Esophagus muscularis mucosa (tissue), 4 donors: ENCODE measurements at regions of chr4 and their contacts with region 1.

Region 1: DNA sequence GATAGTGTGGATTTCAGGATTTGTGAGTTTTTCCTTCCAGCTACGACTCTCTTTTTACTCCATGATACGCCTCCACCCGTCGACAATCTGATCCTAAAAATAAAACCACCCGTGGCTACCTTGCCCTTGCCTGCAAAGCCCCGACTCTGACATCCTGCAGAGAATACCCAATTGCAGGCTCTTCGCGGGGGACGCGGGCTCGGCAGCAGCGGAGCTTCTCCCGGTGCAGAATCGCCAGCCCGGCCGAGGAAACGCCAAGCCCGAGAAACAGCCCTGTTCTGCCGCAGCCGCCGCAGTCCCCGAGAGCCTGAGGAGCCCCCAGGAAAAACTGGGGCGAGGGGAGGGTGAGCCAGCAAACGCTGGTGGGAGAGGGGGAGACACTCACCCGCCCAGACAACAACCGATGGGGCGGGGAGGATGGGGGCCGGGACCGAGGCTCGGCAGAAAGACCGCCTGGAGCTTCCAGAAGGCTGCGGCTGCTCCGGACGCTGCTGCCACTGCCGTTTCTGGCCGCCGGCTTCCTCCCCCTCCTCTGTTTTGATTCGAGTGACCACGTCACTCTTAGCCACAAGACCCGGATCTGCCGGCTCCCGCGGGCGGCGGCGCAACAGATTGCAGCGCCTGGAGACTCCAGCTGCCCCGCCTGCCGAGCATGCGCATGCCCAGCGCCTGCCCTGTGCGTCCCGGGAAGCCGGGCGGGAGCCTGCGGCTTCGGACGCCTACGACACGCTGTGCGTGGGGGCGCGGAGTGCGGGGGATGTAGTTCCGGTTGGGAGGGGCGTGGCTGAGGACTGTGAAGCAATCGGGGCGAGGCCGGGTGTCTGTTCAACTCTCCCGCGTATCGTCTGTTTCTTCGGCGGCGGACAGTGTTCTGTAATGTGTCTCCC is at the start of gene SMIM14:
- DNase-seq: peak; percentile 99
- H3K4me3 ChIP-seq: peak within 1 kb of the TSS; percentile 72 to 96 (median 92)
- H3K27ac ChIP-seq: peak within 1 kb of the TSS; percentile 94 to 100 (median 97)
- H3K4me1 ChIP-seq: peaks cover 21 to 37% (median 29%) of the 10 kb centered on the region in 4 donors
- H3K27me3 ChIP-seq: no peaks in the 10 kb centered on the region
- CTCF ChIP-seq: peak; percentile 18 to 30 (median 27)
- EP300 ChIP-seq: no peak
- POLR2A ChIP-seq: peak; percentile 93
- total RNA-seq, gene SMIM14: 27.3 to 39.0 (median 29.6) TPM

Region 2: GRCh38 chr4:39083164-39083563 is 555.4 kb before region 1 on chr4:
- intact Hi-C with region 1: no loop called
- DNase-seq: no peak
- H3K4me3 ChIP-seq: no peak overlapping the region
- H3K27ac ChIP-seq: no peak overlapping the region
- H3K4me1 ChIP-seq: no peaks in the 10 kb centered on the region
- H3K27me3 ChIP-seq: no peaks in the 10 kb centered on the region
- CTCF ChIP-seq: no peak
- EP300 ChIP-seq: no peak
- POLR2A ChIP-seq: no peak

Region 3: GRCh38 chr4:39458505-39459300 is 179.9 kb before region 1 on chr4 and contains the starts of genes LIAS and RPL9:
- intact Hi-C with region 1: loop called (anchors 5 kb)
- DNase-seq: peak; percentile 99
- H3K4me3 ChIP-seq: peak within 1 kb of the TSS; percentile 70 to 86 (median 77)
- H3K27ac ChIP-seq: peak within 1 kb of the TSS; percentile 95 to 96 (median 96)
- H3K4me1 ChIP-seq: peaks cover 24 to 47% (median 42%) of the 10 kb centered on the region in 4 donors
- H3K27me3 ChIP-seq: no peaks in the 10 kb centered on the region
- CTCF ChIP-seq: peak in 1 of 3 experiments; percentile 12
- EP300 ChIP-seq: no peak
- POLR2A ChIP-seq: peak; percentile 92
- total RNA-seq, gene LIAS: 8.5 to 11.6 (median 9.7) TPM
- total RNA-seq, gene RPL9: 1,962 to 6,543 (median 3,653) TPM

Region 4: GRCh38 chr4:39527273-39528060 is 111.1 kb before region 1 on chr4 and contains the start of gene UGDH:
- intact Hi-C with region 1: loop called (anchors 2 kb)
- DNase-seq: peak; percentile 98
- H3K4me3 ChIP-seq: peak within 1 kb of the TSS; percentile 75 to 89 (median 85)
- H3K27ac ChIP-seq: peak within 1 kb of the TSS; percentile 92 to 98 (median 95)
- H3K4me1 ChIP-seq: peaks cover 19 to 36% (median 31%) of the 10 kb centered on the region in 4 donors
- H3K27me3 ChIP-seq: no peaks in the 10 kb centered on the region
- CTCF ChIP-seq: peak in 1 of 3 experiments; percentile 16
- EP300 ChIP-seq: no peak
- POLR2A ChIP-seq: peak; percentile 87
- total RNA-seq, gene UGDH: 36.4 to 180 (median 42.1) TPM

Region 5: DNA sequence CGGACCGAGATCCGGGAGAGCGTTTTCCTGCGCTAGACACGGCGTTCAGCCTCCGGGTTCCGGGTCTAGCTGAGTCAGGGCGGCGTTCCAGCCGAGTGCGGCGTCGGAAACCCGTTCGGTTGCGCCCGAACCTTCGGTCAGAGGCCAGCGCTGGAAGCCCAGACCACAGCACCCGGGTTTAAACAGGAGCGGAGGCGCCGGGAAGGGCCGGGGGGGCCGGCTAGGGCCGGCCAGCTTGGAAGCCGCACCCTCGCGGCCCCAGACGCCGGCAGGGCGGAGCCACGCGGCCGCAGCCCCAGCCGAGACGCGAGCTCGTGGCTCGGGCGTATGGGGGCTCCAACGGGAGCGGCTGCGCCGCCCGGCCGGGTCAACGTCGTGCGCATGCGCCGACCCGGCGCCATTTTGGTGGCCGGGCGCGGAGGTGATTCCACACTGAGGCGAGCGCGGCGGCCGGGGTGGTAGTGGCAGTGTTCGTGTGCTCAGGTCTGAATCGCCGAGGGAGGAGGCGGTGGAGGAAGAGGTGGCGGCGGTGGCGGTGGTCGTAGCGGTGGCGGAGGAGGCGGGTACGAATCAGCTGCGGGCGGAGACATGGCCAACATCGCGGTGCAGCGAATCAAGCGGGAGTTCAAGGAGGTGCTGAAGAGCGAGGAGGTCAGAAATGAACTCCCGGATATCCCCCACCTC is 59.3 kb after region 1 on chr4 and contains the start of gene UBE2K:
- intact Hi-C with region 1: loop called (anchors 5 kb)
- DNase-seq: peak; percentile 94
- H3K4me3 ChIP-seq: peak within 1 kb of the TSS; percentile 85 to 92 (median 88)
- H3K27ac ChIP-seq: peak within 1 kb of the TSS; percentile 92 to 96 (median 94)
- H3K4me1 ChIP-seq: peaks cover 12 to 50% (median 40%) of the 10 kb centered on the region in 4 donors
- H3K27me3 ChIP-seq: no peaks in the 10 kb centered on the region
- CTCF ChIP-seq: peak in 1 of 3 experiments; percentile 18
- EP300 ChIP-seq: no peak
- POLR2A ChIP-seq: peak; percentile 78
- total RNA-seq, gene UBE2K: 31.7 to 41.5 (median 34.3) TPM

Region 6: GRCh38 chr4:39977489-39978377 is 339.1 kb after region 1 on chr4 and contains the start of gene PDS5A:
- intact Hi-C with region 1: loop called (anchors 5 kb)
- DNase-seq: peak; percentile 93
- H3K4me3 ChIP-seq: peak within 1 kb of the TSS; percentile 84 to 97 (median 90)
- H3K27ac ChIP-seq: peak within 1 kb of the TSS; percentile 96 to 97 (median 97)
- H3K4me1 ChIP-seq: peaks cover 14 to 41% (median 31%) of the 10 kb centered on the region in 4 donors
- H3K27me3 ChIP-seq: no peaks in the 10 kb centered on the region
- CTCF ChIP-seq: peak; percentile 84 to 86 (median 85)
- EP300 ChIP-seq: no peak
- POLR2A ChIP-seq: no peak
- total RNA-seq, gene PDS5A: 48.2 to 56.1 (median 51.3) TPM

Region 7: GRCh38 chr4:40056716-40057585 is 418.4 kb after region 1 on chr4 and contains the start of gene N4BP2:
- intact Hi-C with region 1: loop called (anchors 10 kb)
- DNase-seq: peak; percentile 93
- H3K4me3 ChIP-seq: peak within 1 kb of the TSS; percentile 80 to 96 (median 90)
- H3K27ac ChIP-seq: peak within 1 kb of the TSS; percentile 96 to 100 (median 100)
- H3K4me1 ChIP-seq: peaks cover 16 to 32% (median 29%) of the 10 kb centered on the region in 4 donors
- H3K27me3 ChIP-seq: no peaks in the 10 kb centered on the region
- CTCF ChIP-seq: peak; percentile 67 to 89 (median 85)
- EP300 ChIP-seq: no peak
- POLR2A ChIP-seq: peak; percentile 94
- total RNA-seq, gene N4BP2: 5.5 to 9.7 (median 7.7) TPM